PC-9 (cell line): ENCODE measurements at regions of chr3 and their contacts with region 1.

Region 1: GRCh38 chr3:150763122-150763841 is at the start of gene SIAH2:
- DNase-seq: peak; percentile 88 to 95
- H3K4me3 ChIP-seq: peak within 1 kb of the TSS; percentile 69
- H3K27ac ChIP-seq: peak within 1 kb of the TSS; percentile 84
- H3K4me1 ChIP-seq: peaks cover 55% of the 10 kb centered on the region
- H3K27me3 ChIP-seq: no peaks in the 10 kb centered on the region
- CTCF ChIP-seq: no peak
- total RNA-seq, gene SIAH2: 19.4 and 20.3 TPM in 2 replicates

Region 2: DNA sequence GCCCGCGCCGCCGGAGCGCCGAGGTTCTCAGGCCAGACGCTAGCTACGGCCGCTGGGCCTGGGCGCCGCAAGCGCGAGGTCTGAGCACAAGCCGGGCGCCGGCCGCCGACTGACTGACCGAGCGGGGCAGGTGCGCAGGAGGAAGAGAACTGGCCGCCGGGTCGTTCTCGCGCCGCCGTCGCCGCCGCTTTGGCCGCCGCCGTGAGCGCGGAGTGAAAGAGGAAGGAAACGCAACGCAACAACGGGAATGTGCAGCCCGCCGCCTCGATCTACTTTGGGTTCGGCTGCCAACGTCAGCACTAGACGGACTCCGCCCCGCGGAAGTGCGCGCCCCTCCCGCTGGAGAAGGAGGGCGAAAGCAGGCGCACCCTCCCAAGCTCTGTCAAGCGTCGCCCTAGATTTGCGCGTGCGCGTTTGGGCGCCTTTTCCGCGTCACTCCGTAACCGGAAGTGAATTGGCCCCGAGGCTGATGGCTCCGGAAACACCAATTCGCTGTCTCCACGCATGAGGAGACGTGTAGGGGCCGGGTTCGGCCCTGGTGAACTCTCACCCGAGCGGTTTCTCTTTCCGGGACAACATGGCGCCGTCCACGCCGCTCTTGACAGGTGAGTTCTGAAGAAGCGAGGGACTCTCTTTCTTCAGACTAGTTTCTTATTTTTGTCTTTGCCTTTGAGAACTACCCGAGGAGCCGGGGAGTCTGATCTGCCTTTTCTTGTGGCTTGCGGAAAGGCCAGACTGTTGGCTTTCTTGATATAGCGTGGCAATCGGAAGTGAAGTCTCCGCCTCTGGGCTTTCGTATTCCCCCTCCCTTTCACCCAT is 216.8 kb before region 1 on chr3 and contains the starts of genes EIF2A and SERP1:
- CTCF ChIA-PET with region 1: no interaction called
- POLR2A ChIA-PET with region 1: interaction called, 3 read pairs
- intact Hi-C with region 1: loop called (anchors 5 kb)
- DNase-seq: peak; percentile 96 to 99
- H3K4me3 ChIP-seq: peak within 1 kb of the TSS; percentile 82
- H3K27ac ChIP-seq: peak within 1 kb of the TSS; percentile 93
- H3K4me1 ChIP-seq: peaks cover 27% of the 10 kb centered on the region
- H3K27me3 ChIP-seq: no peaks in the 10 kb centered on the region
- CTCF ChIP-seq: no peak
- total RNA-seq, gene EIF2A: 96.4 and 102 TPM in 2 replicates
- total RNA-seq, gene SERP1: 106 and 113 TPM in 2 replicates

Region 3: GRCh38 chr3:150721285-150722130 is 41.8 kb before region 1 on chr3:
- CTCF ChIA-PET with region 1: interaction called, 4 read pairs
- POLR2A ChIA-PET with region 1: no interaction called
- intact Hi-C with region 1: loop called (anchors 1 kb)
- DNase-seq: peak in 1 of 2 experiments; percentile 48
- H3K4me3 ChIP-seq: no peak overlapping the region
- H3K27ac ChIP-seq: no peak overlapping the region
- H3K4me1 ChIP-seq: 0 out of 2 replicates have a peak, but pooled peaks cover 5% of the 10 kb centered on the region
- H3K27me3 ChIP-seq: no peaks in the 10 kb centered on the region
- CTCF ChIP-seq: peak; percentile 93

Region 4: DNA sequence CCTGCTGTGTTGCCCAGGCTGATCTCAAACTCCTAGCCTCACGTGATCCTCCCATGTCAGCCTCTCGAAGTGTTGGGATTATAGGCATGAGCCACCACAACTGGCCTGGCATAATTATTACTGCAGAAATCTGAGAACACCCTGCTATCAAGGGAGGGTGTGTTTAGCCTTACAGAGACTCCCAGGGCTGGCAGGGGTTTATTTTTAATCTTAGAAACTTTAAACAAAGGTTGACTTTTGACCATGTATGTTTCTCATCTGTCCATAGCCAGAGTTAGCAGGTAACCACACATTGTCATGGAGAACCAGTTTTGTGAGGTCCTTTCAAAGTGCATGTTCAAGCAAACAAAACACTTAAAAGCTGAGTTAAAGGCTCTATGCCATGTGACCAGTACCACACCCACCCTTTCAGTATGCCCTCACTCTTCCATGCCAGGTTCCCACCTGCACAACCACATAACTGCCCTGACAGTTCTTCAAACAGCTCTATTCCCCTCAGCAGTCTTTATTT is 11.5 kb before region 1 on chr3:
- CTCF ChIA-PET with region 1: no interaction called
- POLR2A ChIA-PET with region 1: no interaction called
- intact Hi-C with region 1: loop called (anchors 1 kb)
- DNase-seq: peak; percentile 61 to 93
- H3K4me3 ChIP-seq: no peak overlapping the region
- H3K27ac ChIP-seq: peak overlapping the region; percentile 60
- H3K4me1 ChIP-seq: peaks cover 22% of the 10 kb centered on the region
- H3K27me3 ChIP-seq: no peaks in the 10 kb centered on the region
- CTCF ChIP-seq: no peak

Region 5: GRCh38 chr3:150830094-150830681 is 66.9 kb after region 1 on chr3:
- CTCF ChIA-PET with region 1: no interaction called
- POLR2A ChIA-PET with region 1: interaction called, 24 read pairs
- intact Hi-C with region 1: no loop called
- DNase-seq: no peak
- H3K4me3 ChIP-seq: no peak overlapping the region
- H3K27ac ChIP-seq: no peak overlapping the region
- H3K4me1 ChIP-seq: no peaks in the 10 kb centered on the region
- H3K27me3 ChIP-seq: no peaks in the 10 kb centered on the region
- CTCF ChIP-seq: peak; percentile 54

Region 6: GRCh38 chr3:150945226-150946032 is 182.1 kb after region 1 on chr3:
- CTCF ChIA-PET with region 1: no interaction called
- POLR2A ChIA-PET with region 1: interaction called, 14 read pairs
- intact Hi-C with region 1: no loop called
- DNase-seq: peak in 1 of 2 experiments; percentile 12
- H3K4me3 ChIP-seq: no peak overlapping the region
- H3K27ac ChIP-seq: no peak overlapping the region
- H3K4me1 ChIP-seq: no peaks in the 10 kb centered on the region
- H3K27me3 ChIP-seq: no peaks in the 10 kb centered on the region
- CTCF ChIP-seq: no peak